ENCODE measurements at regions of chr2 and their contacts with region 1.

Region 1: GRCh38 chr2:121670181-121670580 is 20.9 kb upstream of the CLASP1 start:
- DNase-seq: no peak
- H3K4me3 ChIP-seq: no peak overlapping the region
- H3K27ac ChIP-seq: no peak overlapping the region
- H3K4me1 ChIP-seq: no peaks in the 10 kb centered on the region
- H3K27me3 ChIP-seq: no peaks in the 10 kb centered on the region
- CTCF ChIP-seq: no peak

Region 2: DNA sequence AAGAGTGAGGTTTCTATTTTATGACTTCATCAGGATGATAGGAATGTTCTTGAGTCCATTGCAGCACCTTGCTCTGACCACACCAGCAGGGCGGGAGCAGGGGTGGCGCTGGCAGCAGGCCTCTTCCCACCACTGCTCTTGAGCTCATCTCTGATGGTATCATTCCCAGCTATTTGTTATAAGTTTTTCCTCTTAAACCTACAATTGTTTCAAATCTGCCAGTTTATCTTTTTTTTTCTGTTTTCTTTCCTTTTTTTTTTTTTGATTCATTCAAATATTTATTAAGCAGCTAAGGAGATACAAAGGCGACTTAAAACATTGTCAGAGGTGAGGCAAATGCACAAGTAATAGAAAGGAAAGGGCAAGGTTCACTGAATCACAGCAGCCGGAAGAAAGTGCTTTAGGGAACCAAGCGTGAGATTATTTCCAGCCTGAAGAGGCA is 37.8 kb after region 1 on chr2:
- CTCF ChIA-PET with region 1: no interaction called
- POLR2A ChIA-PET with region 1: interaction called, 19 read pairs
- intact Hi-C with region 1: no loop called
- DNase-seq: peak; percentile 51 to 76
- H3K4me3 ChIP-seq: no peak overlapping the region
- H3K27ac ChIP-seq: peak overlapping the region; percentile 46
- H3K4me1 ChIP-seq: peaks cover 8% of the 10 kb centered on the region
- H3K27me3 ChIP-seq: no peaks in the 10 kb centered on the region
- CTCF ChIP-seq: no peak

Region 3: DNA sequence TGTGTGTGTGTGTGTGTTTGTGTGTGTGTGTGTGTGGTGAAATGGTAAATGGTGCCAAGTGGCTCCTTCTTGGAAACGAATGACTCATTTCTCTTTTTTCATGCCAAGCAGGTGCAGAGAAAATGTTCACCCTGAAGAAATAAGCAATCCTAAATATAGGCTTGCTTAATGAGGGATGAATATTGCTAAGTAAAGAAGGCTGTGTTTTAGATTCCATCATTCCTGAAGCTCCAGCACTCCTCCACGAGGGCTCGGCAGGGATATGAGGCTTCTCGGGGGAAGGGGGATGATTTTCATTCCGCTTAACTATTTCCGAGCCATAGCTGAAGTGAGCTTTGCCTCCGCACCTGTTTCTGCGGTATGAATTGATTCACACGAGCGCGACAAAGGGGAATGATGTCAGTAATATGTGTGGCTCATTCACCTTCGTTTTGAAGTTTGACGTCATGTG is 158.1 kb after region 1 on chr2:
- CTCF ChIA-PET with region 1: no interaction called
- POLR2A ChIA-PET with region 1: no interaction called
- intact Hi-C with region 1: no loop called
- DNase-seq: no peak
- H3K4me3 ChIP-seq: no peak overlapping the region
- H3K27ac ChIP-seq: no peak overlapping the region
- H3K4me1 ChIP-seq: no peaks in the 10 kb centered on the region
- H3K27me3 ChIP-seq: peaks cover 91% of the 10 kb centered on the region
- CTCF ChIP-seq: no peak

Measured in PC-9 (cell line).